MCF 10A (cell line): ENCODE measurements at regions of chr12 and their contacts with region 1.

Region 1: DNA sequence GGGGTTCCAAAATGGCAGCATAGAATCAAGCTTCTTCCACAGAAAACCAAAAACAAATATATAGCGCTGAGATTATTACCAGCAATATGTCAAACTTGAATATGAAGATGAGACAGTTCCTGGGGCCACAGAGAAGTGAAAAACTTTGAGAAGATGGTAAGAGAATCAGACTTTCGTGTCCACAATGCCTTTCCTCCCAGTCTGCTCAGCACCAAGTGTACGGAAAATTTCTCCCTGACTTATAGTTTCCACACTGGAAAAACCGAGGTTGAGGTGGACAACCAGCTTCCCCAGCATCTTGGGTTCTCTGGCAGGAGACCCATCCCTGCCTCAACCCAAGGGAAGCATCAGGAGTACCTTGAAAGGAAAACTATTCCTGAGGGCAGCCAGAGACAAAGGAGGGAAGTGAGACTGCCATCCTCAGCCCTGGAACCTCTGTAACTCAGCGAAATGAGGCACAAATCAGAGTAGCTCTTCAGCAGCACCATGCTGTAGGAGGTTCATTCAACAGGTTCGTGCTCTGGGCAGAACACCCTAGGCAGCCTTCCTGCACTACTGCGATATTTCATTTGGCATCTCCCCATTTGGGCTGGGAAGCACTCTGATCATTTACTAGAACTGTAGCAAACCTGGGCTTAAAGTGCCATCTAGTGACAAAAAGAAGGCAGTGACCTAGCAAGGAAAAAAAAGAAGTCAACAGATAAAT is 52.4 kb upstream of the CAPRIN2 start:
- DNase-seq: peak; percentile 75
- H3K4me3 Mint-ChIP-seq: no peak overlapping the region
- H3K27ac Mint-ChIP-seq: no peak overlapping the region
- H3K4me1 Mint-ChIP-seq: peaks cover 7% of the 10 kb centered on the region
- H3K27me3 Mint-ChIP-seq: no peaks in the 10 kb centered on the region
- CTCF ChIP-seq: peak; percentile 67

Region 2: GRCh38 chr12:29073628-29074239 is 1733.4 kb before region 1 on chr12:
- CTCF ChIA-PET with region 1: interaction called, 10 read pairs
- POLR2A ChIA-PET with region 1: no interaction called
- intact Hi-C with region 1: no loop called
- DNase-seq: peak; percentile 49
- H3K4me3 Mint-ChIP-seq: no peak overlapping the region
- H3K27ac Mint-ChIP-seq: no peak overlapping the region
- H3K4me1 Mint-ChIP-seq: no peaks in the 10 kb centered on the region
- H3K27me3 Mint-ChIP-seq: peaks cover 40% of the 10 kb centered on the region
- CTCF ChIP-seq: peak; percentile 62

Region 3: GRCh38 chr12:29782285-29782870 is 1024.8 kb before region 1 on chr12:
- CTCF ChIA-PET with region 1: no interaction called
- POLR2A ChIA-PET with region 1: no interaction called
- intact Hi-C with region 1: loop called (anchors 5 kb)
- DNase-seq: peak; percentile 86
- H3K4me3 Mint-ChIP-seq: peak overlapping the region; percentile 91
- H3K27ac Mint-ChIP-seq: peak overlapping the region; percentile 88
- H3K4me1 Mint-ChIP-seq: peaks cover 19% of the 10 kb centered on the region
- H3K27me3 Mint-ChIP-seq: no peaks in the 10 kb centered on the region
- CTCF ChIP-seq: no peak

Region 4: GRCh38 chr12:30457621-30458289 is 349.4 kb before region 1 on chr12:
- CTCF ChIA-PET with region 1: no interaction called
- POLR2A ChIA-PET with region 1: no interaction called
- intact Hi-C with region 1: loop called (anchors 10 kb)
- DNase-seq: peak; percentile 87
- H3K4me3 Mint-ChIP-seq: no peak overlapping the region
- H3K27ac Mint-ChIP-seq: peak overlapping the region; percentile 50
- H3K4me1 Mint-ChIP-seq: peaks cover 12% of the 10 kb centered on the region
- H3K27me3 Mint-ChIP-seq: no peaks in the 10 kb centered on the region
- CTCF ChIP-seq: peak; percentile 37

Region 5: DNA sequence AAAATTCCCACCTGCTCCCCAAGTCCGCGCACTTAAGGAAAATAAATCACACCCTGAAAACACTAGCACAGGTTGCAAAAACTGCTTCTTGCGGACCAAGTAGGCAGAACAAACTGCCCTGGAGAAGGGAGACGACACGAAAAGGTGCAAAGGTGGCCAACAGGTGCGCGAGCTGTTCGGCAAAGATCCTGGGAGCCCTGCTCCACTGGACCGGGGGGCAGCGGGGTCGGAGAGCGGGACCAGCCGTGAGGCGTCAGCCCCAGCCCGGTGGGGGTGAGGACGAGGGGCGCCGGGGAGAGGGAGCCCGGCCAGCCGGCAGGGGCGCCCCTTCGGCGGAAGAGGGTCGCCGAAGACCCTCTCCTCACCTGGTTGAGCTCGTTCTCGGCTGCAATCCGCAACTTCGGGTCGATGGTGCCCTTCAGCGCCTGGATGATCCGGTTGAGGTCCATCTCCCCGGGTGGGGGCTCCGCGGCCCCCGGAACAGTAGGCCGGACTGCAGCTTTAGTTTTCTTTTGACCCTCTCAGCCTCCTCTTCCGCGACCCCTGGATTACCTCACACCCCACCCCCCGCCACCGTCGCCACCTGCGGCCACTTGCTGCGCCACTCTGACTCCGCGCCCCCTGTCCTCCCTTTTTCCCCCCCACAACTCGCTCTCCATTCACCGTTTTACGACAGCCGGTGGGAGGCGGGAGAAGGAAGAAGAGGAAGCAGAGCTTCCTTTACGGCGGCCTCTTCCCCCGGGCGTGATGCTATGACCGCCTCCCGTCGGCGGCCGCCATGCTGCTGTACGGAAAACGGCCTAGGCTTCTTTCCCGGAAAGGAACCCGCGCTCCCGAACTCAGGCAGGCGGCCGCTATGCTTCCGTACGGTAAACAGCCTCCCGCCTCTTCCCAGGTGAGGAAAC is 111.7 kb before region 1 on chr12 and contains the start of gene IPO8:
- CTCF ChIA-PET with region 1: interaction called, 26 read pairs
- POLR2A ChIA-PET with region 1: interaction called, 4 read pairs
- intact Hi-C with region 1: no loop called
- DNase-seq: peak; percentile 95
- H3K4me3 Mint-ChIP-seq: peak within 1 kb of the TSS; percentile 93
- H3K27ac Mint-ChIP-seq: peak within 1 kb of the TSS; percentile 92
- H3K4me1 Mint-ChIP-seq: peaks cover 30% of the 10 kb centered on the region
- H3K27me3 Mint-ChIP-seq: no peaks in the 10 kb centered on the region
- CTCF ChIP-seq: peak; percentile 48
- total RNA-seq, gene IPO8: 36.3 and 41.7 TPM in 2 replicates

Region 6: DNA sequence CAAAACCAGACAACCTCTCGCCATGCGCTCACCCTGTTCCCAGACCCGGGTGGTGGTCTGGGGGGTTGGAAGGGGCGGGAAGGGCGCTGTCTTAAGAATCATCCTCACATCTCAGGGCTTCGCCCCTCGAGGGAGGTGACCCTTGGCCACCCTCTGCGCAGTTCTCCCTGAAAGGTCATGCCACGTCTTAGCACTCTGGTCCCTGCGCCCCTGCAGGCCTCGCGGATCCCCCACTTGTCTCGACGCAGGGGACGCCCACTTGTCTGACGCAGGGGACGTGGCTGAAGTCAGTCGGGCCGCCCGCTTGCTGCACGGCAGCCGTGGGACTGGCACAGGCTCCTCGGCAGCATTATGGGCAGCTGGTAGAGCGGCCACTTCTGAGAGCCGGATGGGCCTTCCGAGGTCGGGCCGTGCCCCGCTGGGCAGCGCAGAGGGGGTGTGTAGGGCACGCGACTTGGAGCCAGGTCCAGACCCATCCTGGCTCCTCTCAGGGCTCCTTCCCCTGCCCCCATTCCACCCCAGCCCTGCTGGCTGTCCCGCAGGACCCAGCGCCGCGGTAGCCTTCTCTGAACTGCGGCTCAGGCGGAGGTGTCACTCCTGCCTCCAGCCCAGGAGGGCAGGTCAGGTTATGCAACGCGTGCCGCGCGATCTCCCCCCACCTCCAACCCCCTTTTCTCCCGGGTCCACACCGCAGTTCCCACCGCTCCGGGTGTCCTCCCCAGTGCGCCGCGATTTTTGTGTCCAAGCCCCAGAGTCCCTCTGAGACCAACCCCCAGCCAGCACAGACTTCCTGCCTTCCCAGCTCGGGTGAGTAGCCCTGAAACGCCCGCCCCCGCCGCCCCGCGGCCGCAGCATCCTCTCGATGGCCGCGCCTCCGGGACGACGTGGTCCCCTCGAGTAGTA is 11.5 kb before region 1 on chr12:
- CTCF ChIA-PET with region 1: interaction called, 26 read pairs
- POLR2A ChIA-PET with region 1: interaction called, 14 read pairs
- intact Hi-C with region 1: no loop called
- DNase-seq: peak; percentile 83
- H3K4me3 Mint-ChIP-seq: peak overlapping the region; percentile 79
- H3K27ac Mint-ChIP-seq: peak overlapping the region; percentile 67
- H3K4me1 Mint-ChIP-seq: peaks cover 49% of the 10 kb centered on the region
- H3K27me3 Mint-ChIP-seq: no peaks in the 10 kb centered on the region
- CTCF ChIP-seq: no peak

Region 7: GRCh38 chr12:30939234-30939633 is 132.1 kb after region 1 on chr12:
- CTCF ChIA-PET with region 1: no interaction called
- POLR2A ChIA-PET with region 1: no interaction called
- intact Hi-C with region 1: no loop called
- DNase-seq: peak; percentile 28
- H3K4me3 Mint-ChIP-seq: no peak overlapping the region
- H3K27ac Mint-ChIP-seq: no peak overlapping the region
- H3K4me1 Mint-ChIP-seq: no peaks in the 10 kb centered on the region
- H3K27me3 Mint-ChIP-seq: peaks cover 22% of the 10 kb centered on the region
- CTCF ChIP-seq: no peak

Region 8: GRCh38 chr12:31790759-31791158 is 983.6 kb after region 1 on chr12:
- CTCF ChIA-PET with region 1: no interaction called
- POLR2A ChIA-PET with region 1: no interaction called
- intact Hi-C with region 1: no loop called
- DNase-seq: no peak
- H3K4me3 Mint-ChIP-seq: no peak overlapping the region
- H3K27ac Mint-ChIP-seq: no peak overlapping the region
- H3K4me1 Mint-ChIP-seq: no peaks in the 10 kb centered on the region
- H3K27me3 Mint-ChIP-seq: no peaks in the 10 kb centered on the region
- CTCF ChIP-seq: no peak